ENCODE measurements at regions of chr14 and their contacts with region 1.

Region 1: GRCh38 chr14:75982266-75983018 is 647 bp upstream of the TGFB3 start:
- DNase-seq: peak; percentile 79 to 93 (median 89)
- ATAC-seq: peak; percentile 70 to 81 (median 75)
- H3K4me3 ChIP-seq: peak overlapping the region; percentile 42 to 80 (median 64)
- H3K27ac ChIP-seq: peak overlapping the region; percentile 95 to 99 (median 98)
- H3K4me1 ChIP-seq: peaks cover 15 to 38% (median 28%) of the 10 kb centered on the region in 3 donors
- H3K27me3 ChIP-seq: no peaks in the 10 kb centered on the region
- CTCF ChIP-seq: peak; percentile 45 to 58 (median 48)

Region 2: GRCh38 chr14:75709207-75709812 is 273.1 kb before region 1 on chr14:
- intact Hi-C with region 1: loop called in 2 of 3 experiments (anchors 5 kb)
- DNase-seq: peak; percentile 62 to 83 (median 68)
- ATAC-seq: peak; percentile 36 to 74 (median 66)
- H3K4me3 ChIP-seq: no peak overlapping the region
- H3K27ac ChIP-seq: no peak overlapping the region
- H3K4me1 ChIP-seq: peaks cover 15 to 18% (median 17%) of the 10 kb centered on the region in 3 donors
- H3K27me3 ChIP-seq: no peaks in the 10 kb centered on the region
- CTCF ChIP-seq: peak; percentile 43 to 74 (median 66)

Region 3: GRCh38 chr14:75800792-75801191 is 181.7 kb before region 1 on chr14:
- intact Hi-C with region 1: no loop called
- DNase-seq: peak in 1 of 6 donors; percentile 6
- ATAC-seq: no peak
- H3K4me3 ChIP-seq: no peak overlapping the region
- H3K27ac ChIP-seq: no peak overlapping the region
- H3K4me1 ChIP-seq: no peaks in the 10 kb centered on the region
- H3K27me3 ChIP-seq: no peaks in the 10 kb centered on the region
- CTCF ChIP-seq: no peak

Region 4: DNA sequence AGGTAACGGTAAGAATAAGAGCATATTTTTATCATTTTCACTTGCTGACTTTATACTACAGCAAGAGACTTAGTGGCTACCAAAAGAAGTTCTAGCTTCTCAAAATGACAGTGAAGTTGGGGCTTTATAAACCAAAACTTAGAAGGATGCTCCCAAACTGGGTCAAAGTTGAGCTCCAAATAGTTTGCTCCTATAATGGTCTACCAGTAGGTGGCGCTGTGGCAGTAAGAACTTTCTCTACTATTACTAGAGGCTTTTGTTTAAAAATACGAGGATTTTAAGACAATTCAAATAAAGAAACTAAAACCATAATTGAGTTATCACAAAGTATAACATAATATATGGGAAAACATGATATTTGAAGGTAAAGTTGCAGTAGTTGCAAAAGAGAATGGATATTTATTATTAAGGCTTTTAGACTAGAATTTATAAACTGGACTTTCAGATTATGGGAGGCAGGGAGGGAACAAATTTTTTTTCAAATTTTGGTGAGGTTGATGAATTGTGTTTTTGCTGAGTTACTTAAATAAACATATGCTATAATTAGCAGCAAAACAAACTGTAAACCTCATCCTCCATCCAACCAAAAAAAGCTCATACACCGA is 75.7 kb before region 1 on chr14:
- intact Hi-C with region 1: loop called in 1 of 3 experiments (anchors 5 kb)
- DNase-seq: peak in 5 of 6 donors; percentile 31 to 81 (median 58)
- ATAC-seq: peak; percentile 67 to 87 (median 84)
- H3K4me3 ChIP-seq: no peak overlapping the region
- H3K27ac ChIP-seq: no peak overlapping the region
- H3K4me1 ChIP-seq: no peaks in the 10 kb centered on the region
- H3K27me3 ChIP-seq: no peaks in the 10 kb centered on the region
- CTCF ChIP-seq: peak; percentile 73 to 91 (median 82)

Region 5: DNA sequence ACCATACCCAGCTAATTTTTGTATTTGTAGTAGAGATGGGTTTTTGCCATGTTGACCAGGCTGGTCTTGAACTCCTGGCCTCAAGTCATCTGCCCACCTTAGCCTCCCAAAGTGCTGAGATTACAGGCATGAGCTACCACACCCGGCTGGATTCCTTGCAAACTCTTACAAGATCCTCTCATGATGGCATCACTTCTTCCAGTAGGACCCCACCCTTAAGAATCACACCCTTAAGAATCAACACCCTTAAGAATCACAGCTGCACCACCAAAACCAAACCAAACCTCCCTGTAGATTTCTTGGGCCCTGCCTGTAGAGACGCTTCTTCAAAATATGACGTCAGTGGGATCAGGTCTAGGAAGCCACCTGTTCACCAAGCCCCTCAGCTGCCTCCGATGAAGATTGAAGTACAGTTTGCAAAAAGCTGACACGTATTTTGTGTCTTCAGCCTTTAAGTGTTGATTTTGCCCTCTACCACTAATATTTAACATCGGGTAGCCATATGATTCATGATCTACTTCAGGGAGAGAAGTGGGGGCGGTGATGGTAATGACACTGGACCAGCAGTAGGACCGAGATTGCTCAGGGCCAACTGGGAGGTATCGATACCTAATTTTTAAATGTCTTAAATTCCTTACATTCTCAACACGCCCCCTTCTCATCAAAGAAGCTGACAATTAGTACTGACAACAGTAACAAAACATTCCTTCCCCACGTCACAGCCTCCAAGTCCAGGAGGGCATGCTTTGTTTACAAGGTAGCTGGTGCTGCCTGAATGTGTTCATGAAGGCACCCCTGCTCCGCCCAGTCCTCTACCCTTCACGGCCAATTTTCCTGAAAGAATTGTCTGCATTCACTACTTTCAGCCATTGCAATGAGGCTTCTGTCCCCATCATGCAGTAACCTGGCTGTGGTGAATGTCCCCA is 450.6 kb after region 1 on chr14:
- intact Hi-C with region 1: no loop called
- DNase-seq: no peak
- ATAC-seq: no peak
- H3K4me3 ChIP-seq: no peak overlapping the region
- H3K27ac ChIP-seq: no peak overlapping the region
- H3K4me1 ChIP-seq: no peaks in the 10 kb centered on the region
- H3K27me3 ChIP-seq: no peaks in the 10 kb centered on the region
- CTCF ChIP-seq: no peak